ENCODE measurements at regions of chr9 and their contacts with region 1.

Region 1: GRCh38 chr9:76585487-76586389 is 126.8 kb downstream of the GCNT1 start:
- DNase-seq: no peak
- ATAC-seq: no peak
- H3K4me3 ChIP-seq: no peak overlapping the region
- H3K27ac ChIP-seq: peak overlapping the region in 1 of 12 donors; percentile 58
- H3K4me1 ChIP-seq: peaks cover 0 to 42% (median 0%) of the 10 kb centered on the region in 12 donors
- H3K27me3 ChIP-seq: no peaks in the 10 kb centered on the region
- CTCF ChIP-seq: no peak
- POLR2A ChIP-seq: no peak

Region 2: GRCh38 chr9:76634356-76635022 is 48.8 kb after region 1 on chr9:
- intact Hi-C with region 1: loop called in 1 of 10 experiments (anchors 5 kb)
- DNase-seq: no peak
- ATAC-seq: no peak
- H3K4me3 ChIP-seq: no peak overlapping the region
- H3K27ac ChIP-seq: no peak overlapping the region
- H3K4me1 ChIP-seq: peaks cover 0 to 11% (median 0%) of the 10 kb centered on the region in 12 donors
- H3K27me3 ChIP-seq: no peaks in the 10 kb centered on the region
- CTCF ChIP-seq: no peak
- POLR2A ChIP-seq: no peak

Region 3: DNA sequence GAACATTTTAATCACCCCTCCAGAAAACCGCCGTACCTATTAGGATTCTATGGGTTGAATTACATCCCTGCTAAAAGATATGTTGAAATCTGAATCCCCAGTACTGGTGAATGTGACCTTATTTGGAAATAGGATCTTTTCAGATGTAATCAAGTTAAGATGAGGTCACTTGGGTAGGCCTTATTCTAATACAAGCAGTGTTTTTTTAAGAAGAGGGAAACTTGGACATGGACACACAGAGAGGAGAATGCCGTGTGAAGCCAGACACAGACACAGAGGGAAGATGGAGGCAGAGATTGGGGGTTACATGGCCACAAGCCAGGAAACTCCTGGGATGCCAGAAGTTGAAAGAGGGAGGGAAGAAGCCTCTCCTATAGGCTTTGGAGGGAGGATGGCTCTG is 878.9 kb after region 1 on chr9:
- intact Hi-C with region 1: no loop called
- DNase-seq: no peak
- ATAC-seq: no peak
- H3K4me3 ChIP-seq: no peak overlapping the region
- H3K27ac ChIP-seq: no peak overlapping the region
- H3K4me1 ChIP-seq: peaks cover 0 to 7% (median 0%) of the 10 kb centered on the region in 12 donors
- H3K27me3 ChIP-seq: no peaks in the 10 kb centered on the region
- CTCF ChIP-seq: no peak
- POLR2A ChIP-seq: no peak